Calu3 (cell line): ENCODE measurements at regions of chr3 and their contacts with region 1.

Region 1: GRCh38 chr3:186953011-186953487 is 22.7 kb downstream of the ST6GAL1 start:
- DNase-seq: no peak
- H3K4me3 Mint-ChIP-seq: no peak overlapping the region
- H3K27ac Mint-ChIP-seq: no peak overlapping the region
- H3K4me1 Mint-ChIP-seq: no peaks in the 10 kb centered on the region
- H3K27me3 Mint-ChIP-seq: peaks cover 17% of the 10 kb centered on the region
- CTCF ChIP-seq: no peak

Region 2: GRCh38 chr3:186298876-186299275 is 654.2 kb before region 1 on chr3:
- CTCF ChIA-PET with region 1: no interaction called
- intact Hi-C with region 1: no loop called
- DNase-seq: no peak
- H3K4me3 Mint-ChIP-seq: no peak overlapping the region
- H3K27ac Mint-ChIP-seq: no peak overlapping the region
- H3K4me1 Mint-ChIP-seq: no peaks in the 10 kb centered on the region
- H3K27me3 Mint-ChIP-seq: peaks cover 15% of the 10 kb centered on the region
- CTCF ChIP-seq: no peak

Region 3: GRCh38 chr3:187072511-187072910 is 119.5 kb after region 1 on chr3:
- CTCF ChIA-PET with region 1: no interaction called
- intact Hi-C with region 1: loop called (anchors 5 kb)
- DNase-seq: no peak
- H3K4me3 Mint-ChIP-seq: no peak overlapping the region
- H3K27ac Mint-ChIP-seq: no peak overlapping the region
- H3K4me1 Mint-ChIP-seq: no peaks in the 10 kb centered on the region
- H3K27me3 Mint-ChIP-seq: no peaks in the 10 kb centered on the region
- CTCF ChIP-seq: no peak